A549 (cell line): ENCODE measurements at regions of chr3 and their contacts with region 1.

Region 1: GRCh38 chr3:48400824-48401433 is 28.9 kb downstream of the FBXW12 start:
- DNase-seq: peak; percentile 67 to 70
- ATAC-seq: peak; percentile 67 to 84; a peak in 5 of 6 replicates
- H3K4me3 ChIP-seq: no peak overlapping the region
- H3K27ac ChIP-seq: no peak overlapping the region
- H3K4me1 ChIP-seq: peaks cover 10% of the 10 kb centered on the region
- CTCF ChIP-seq: peak; percentile 73
- EP300 ChIP-seq: no peak
- POLR2A ChIP-seq: no peak
- RAD21 ChIP-seq: peak; percentile 80 to 83

Region 2: DNA sequence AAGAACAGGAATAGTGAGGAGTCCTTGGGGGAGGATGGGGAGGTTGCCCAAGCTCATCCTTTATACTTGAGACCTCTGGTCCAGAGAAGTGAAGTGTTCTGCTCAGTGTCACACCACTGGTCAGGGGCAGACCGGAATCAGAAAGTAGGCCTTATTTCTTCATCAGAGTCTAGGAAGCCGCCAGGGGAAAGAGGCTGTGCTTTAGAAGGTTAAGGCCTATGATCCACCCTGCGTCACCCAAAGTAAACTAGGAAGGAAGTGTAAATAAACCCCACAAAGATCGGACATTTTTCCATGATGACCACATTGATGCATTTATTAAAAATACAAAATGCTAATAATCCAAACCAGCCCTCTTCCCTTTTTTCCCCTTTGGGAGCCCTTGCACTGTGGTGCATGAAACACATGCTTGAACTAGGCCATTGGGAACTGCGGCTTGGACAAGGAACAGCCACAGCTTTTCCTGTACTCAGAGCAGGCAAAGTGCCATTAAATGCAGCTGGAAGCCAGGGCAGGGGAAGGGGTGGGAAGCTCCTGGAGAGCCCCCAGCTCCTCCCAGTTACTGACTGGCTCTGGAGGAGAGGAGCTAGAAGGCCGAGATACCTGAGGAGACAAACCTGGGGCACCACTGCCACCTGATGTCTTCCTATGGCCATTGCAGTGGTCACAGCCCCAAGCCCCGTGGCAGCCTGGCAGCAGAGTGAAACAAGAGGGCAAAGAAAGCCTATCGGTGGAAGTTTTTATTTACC is 249.7 kb before region 1 on chr3:
- CTCF ChIA-PET with region 1: no interaction called
- POLR2A ChIA-PET with region 1: no interaction called
- DNase-seq: peak; percentile 62 to 80
- ATAC-seq: peak; percentile 96 to 99
- H3K4me3 ChIP-seq: no peak overlapping the region
- H3K27ac ChIP-seq: peak overlapping the region in 1 of 2 experiments; percentile 37; a peak in 1 of 6 replicates
- H3K4me1 ChIP-seq: peaks cover 25% of the 10 kb centered on the region
- CTCF ChIP-seq: peak; percentile 70
- EP300 ChIP-seq: no peak
- POLR2A ChIP-seq: no peak
- RAD21 ChIP-seq: peak; percentile 87 to 94

Region 3: DNA sequence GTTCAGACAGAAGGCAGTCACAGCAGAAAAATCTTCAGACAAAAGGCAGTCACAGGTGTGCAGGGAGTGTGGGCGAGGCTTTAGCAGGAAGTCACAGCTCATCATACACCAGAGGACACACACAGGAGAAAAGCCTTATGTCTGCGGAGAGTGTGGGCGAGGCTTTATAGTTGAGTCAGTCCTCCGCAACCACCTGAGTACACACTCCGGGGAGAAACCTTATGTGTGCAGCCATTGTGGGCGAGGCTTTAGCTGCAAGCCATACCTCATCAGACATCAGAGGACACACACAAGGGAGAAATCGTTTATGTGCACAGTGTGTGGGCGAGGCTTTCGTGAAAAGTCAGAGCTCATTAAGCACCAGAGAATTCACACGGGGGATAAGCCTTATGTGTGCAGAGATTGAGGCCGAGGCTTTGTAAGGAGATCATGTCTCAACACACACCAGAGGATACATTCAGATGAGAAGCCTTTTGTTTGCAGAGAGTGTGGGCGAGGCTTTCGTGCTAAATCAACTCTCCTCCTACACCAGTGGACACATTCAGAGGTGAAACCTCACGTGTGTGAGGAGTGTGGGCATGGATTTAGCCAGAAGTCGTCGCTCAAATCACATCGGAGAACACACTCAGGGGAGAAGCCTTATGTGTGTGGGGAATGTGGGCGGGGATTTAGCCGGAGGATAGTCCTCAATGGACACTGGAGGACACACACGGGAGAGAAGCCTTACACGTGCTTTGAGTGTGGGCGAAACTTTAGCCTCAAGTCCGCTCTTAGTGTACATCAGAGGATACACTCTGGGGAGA is 132.3 kb before region 1 on chr3:
- CTCF ChIA-PET with region 1: interaction called, 18 read pairs
- POLR2A ChIA-PET with region 1: no interaction called
- DNase-seq: no peak
- ATAC-seq: no peak
- H3K4me3 ChIP-seq: no peak overlapping the region
- H3K27ac ChIP-seq: no peak overlapping the region
- H3K4me1 ChIP-seq: no peaks in the 10 kb centered on the region
- CTCF ChIP-seq: no peak
- EP300 ChIP-seq: no peak
- POLR2A ChIP-seq: no peak
- RAD21 ChIP-seq: no peak

Region 4: DNA sequence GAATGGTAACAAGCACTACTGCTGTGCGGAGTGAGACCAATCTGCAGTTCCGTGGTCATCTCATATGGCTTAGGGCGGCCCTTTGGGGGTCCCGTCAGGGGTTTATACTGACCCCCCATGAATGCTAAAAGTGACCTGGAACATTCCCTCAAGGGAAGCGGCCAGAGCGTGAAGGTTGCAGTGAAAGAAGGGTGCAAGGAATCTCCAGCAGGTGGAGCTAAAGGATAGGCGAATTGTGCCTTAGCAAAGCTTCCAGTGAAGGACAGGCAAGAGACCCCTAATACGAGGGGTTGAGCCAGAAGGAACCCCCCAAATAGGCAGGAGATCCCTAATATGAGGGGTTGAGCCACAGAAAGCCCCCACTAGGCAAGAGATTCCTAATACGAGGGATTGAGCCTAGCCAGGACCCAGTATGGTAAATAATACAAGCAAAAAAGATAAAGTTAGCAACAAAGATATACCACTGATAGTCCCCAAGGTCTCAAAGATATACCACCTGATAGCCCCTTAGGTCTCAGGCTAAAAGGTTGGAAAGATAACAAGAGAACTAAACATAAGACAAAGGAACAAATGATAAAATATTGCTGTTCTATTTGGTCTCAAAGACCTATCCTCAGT is 127.2 kb before region 1 on chr3:
- CTCF ChIA-PET with region 1: interaction called, 18 read pairs
- POLR2A ChIA-PET with region 1: no interaction called
- DNase-seq: peak; percentile 54 to 58
- ATAC-seq: peak; percentile 87 to 91
- H3K4me3 ChIP-seq: no peak overlapping the region
- H3K27ac ChIP-seq: no peak overlapping the region
- H3K4me1 ChIP-seq: no peaks in the 10 kb centered on the region
- CTCF ChIP-seq: peak; percentile 78
- EP300 ChIP-seq: no peak
- POLR2A ChIP-seq: no peak
- RAD21 ChIP-seq: peak; percentile 80 to 88

Region 5: GRCh38 chr3:48415554-48415953 is 14.6 kb after region 1 on chr3:
- CTCF ChIA-PET with region 1: interaction called, 18 read pairs
- POLR2A ChIA-PET with region 1: no interaction called
- DNase-seq: no peak
- ATAC-seq: peak in 1 of 2 experiments; percentile 45; a peak in 3 of 6 replicates
- H3K4me3 ChIP-seq: no peak overlapping the region
- H3K27ac ChIP-seq: no peak overlapping the region
- H3K4me1 ChIP-seq: no peaks in the 10 kb centered on the region
- CTCF ChIP-seq: no peak
- EP300 ChIP-seq: no peak
- POLR2A ChIP-seq: no peak
- RAD21 ChIP-seq: no peak

Region 6: GRCh38 chr3:48422270-48422669 is 21.3 kb after region 1 on chr3:
- CTCF ChIA-PET with region 1: interaction called, 488 read pairs
- POLR2A ChIA-PET with region 1: no interaction called
- DNase-seq: no peak
- ATAC-seq: peak in 1 of 2 experiments; percentile 48; a peak in 3 of 6 replicates
- H3K4me3 ChIP-seq: no peak overlapping the region
- H3K27ac ChIP-seq: no peak overlapping the region
- H3K4me1 ChIP-seq: peaks cover 16% of the 10 kb centered on the region
- CTCF ChIP-seq: no peak
- EP300 ChIP-seq: no peak
- POLR2A ChIP-seq: no peak
- RAD21 ChIP-seq: no peak

Region 7: DNA sequence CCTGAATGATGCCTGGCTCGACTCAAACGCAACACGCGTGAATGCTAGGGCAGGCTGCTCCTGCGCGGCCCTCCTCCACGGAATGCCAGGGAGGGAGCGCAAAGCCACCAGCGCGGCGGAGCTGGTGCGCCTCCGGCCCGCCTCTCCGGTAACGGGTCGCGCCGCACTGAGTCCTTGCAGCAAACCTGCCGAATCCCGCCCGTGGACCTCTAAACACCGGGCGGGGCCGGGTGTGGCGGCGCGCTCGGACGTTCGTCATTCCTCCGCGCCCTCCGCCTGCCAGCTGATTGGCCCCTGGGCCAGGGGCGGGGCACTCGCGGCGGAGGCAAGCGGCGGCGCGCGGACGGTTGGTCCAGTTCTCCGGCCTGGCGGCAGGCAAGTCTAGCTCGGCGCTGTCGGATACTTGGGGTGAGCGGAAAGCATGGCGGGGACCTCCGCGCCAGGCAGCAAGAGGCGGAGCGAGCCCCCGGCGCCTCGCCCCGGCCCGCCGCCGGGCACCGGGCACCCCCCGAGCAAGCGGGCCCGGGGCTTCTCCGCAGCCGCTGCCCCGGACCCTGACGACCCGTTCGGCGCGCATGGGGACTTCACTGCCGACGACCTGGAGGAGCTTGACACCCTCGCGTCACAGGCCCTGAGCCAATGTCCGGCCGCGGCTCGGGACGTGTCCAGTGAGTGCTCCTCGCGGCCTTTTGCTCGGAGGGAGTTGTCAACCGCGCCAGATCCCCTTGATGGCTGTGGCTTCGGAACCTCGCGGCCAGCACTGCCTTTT is 45.7 kb after region 1 on chr3 and contains the start of gene ATRIP:
- CTCF ChIA-PET with region 1: interaction called, 13 read pairs
- POLR2A ChIA-PET with region 1: no interaction called
- DNase-seq: peak; percentile 64 to 89
- ATAC-seq: peak; percentile 95 to 97
- H3K4me3 ChIP-seq: peak within 1 kb of the TSS; percentile 67
- H3K27ac ChIP-seq: peak within 1 kb of the TSS; percentile 86 to 97
- H3K4me1 ChIP-seq: peaks cover 20% of the 10 kb centered on the region
- CTCF ChIP-seq: no peak
- EP300 ChIP-seq: no peak
- POLR2A ChIP-seq: peak; percentile 84
- RAD21 ChIP-seq: no peak
- polyA plus RNA-seq, gene ATRIP: 8.5 and 9.4 TPM in 2 replicates

Region 8: DNA sequence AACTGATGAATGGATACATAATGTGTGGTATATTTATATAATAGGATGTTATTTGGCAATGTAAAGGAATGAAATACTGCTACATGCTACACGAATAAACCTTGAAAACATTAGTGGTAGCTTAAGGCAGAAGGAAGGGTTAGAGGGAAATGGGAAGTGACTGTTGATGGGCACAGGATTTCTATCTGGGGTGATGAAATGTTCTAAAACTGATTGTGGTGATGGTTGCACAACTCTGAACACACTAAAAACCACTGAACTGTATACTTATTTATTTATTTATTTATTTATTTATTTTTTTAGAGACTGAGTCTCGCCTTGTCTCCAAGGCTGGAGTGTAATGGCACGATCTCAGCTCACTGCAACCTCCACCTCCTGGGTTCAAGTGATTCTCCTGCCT is 127.8 kb after region 1 on chr3:
- CTCF ChIA-PET with region 1: no interaction called
- POLR2A ChIA-PET with region 1: no interaction called
- DNase-seq: no peak
- ATAC-seq: no peak
- H3K4me3 ChIP-seq: no peak overlapping the region
- H3K27ac ChIP-seq: no peak overlapping the region
- H3K4me1 ChIP-seq: no peaks in the 10 kb centered on the region
- CTCF ChIP-seq: no peak
- EP300 ChIP-seq: no peak
- POLR2A ChIP-seq: no peak
- RAD21 ChIP-seq: no peak

Region 9: DNA sequence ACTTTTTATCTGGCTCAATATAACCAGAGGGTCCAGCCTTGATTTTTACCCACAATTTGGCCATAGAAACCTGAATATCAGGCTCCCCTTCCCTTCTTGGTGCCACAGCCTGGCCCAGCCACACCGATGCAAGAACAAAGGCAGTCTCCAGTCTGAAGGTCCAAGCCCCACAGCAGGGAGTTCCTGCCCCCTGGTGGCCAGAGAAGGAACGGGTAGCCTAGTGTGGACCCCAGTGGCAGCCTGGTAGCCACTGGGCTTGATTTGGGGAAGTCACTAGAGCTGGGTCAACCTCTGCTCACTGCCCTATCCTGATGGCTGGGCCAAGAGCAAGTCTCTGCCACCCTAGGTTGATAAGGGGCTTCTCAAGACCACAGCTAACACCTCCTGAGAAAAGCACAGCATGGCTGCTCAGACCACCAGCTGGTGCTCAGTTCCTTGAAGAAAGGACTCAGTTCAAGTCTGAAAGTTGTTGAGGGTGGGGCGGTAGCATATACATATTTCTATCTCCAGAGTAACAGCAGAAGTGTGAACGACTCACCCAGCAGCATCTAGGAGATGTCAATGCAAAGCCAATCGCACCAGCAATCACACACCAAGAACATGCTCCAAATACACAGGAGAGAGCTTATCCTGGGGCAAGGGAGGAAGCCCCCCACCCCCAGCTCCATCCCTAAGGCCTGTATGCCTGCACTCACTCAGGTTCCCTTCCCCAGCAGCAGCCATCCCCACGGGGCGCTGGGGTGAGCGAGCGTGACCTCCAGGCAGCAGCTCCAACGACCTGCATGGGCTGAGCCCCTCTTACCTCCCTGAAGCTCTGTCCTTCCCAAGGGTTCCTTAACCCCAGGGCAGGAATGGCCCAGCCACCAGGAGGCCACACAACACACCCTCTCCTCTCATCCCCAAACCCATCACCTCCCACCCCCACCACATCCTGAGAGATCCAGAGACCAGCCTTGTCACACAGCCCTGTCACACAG is 148.1 kb after region 1 on chr3:
- CTCF ChIA-PET with region 1: interaction called, 19 read pairs
- POLR2A ChIA-PET with region 1: no interaction called
- DNase-seq: peak in 1 of 2 experiments; percentile 69
- ATAC-seq: peak; percentile 45 to 90
- H3K4me3 ChIP-seq: no peak overlapping the region
- H3K27ac ChIP-seq: 0 out of 6 replicates have a peak overlapping the region, but pooled peaks of 1 of the 2 experiments have one; percentile 48
- H3K4me1 ChIP-seq: no peaks in the 10 kb centered on the region
- CTCF ChIP-seq: peak; percentile 74
- EP300 ChIP-seq: no peak
- POLR2A ChIP-seq: no peak
- RAD21 ChIP-seq: peak; percentile 76 to 87